ENCODE measurements at regions of chr11 and their contacts with region 1.

Region 1: GRCh38 chr11:92070026-92070889 is 154.4 kb upstream of the FAT3 start:
- DNase-seq: no peak
- ATAC-seq: no peak
- H3K4me3 ChIP-seq: no peak overlapping the region
- H3K4me3 Mint-ChIP-seq: no peak overlapping the region
- H3K27ac ChIP-seq: no peak overlapping the region
- H3K27ac Mint-ChIP-seq: no peak overlapping the region
- H3K4me1 ChIP-seq: no peaks in the 10 kb centered on the region
- H3K4me1 Mint-ChIP-seq: no peaks in the 10 kb centered on the region
- H3K27me3 ChIP-seq: no peaks in the 10 kb centered on the region
- H3K27me3 Mint-ChIP-seq: no peaks in the 10 kb centered on the region
- CTCF ChIP-seq: no peak

Region 2: DNA sequence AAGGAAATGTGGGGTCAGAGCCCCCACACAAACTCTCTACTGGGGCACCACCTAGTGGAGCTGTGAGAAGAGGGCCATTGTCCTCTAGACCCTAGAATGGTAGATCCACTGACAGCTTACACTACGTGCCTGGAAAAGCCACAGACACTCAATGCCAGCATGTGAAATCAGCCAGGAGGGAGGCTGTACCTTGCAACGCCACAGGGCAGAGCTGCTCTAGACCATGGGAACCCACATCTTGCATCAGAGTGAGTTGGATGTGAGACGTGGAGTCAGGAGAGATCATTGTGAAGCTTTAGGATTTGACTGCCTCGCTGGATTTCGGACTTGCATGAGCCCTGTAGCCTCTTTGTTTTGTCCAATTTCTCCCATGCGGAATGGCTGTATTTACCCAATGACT is 1394.3 kb before region 1 on chr11:
- CTCF ChIA-PET with region 1: no interaction called
- POLR2A ChIA-PET with region 1: no interaction called
- intact Hi-C with region 1: loop called (anchors 10 kb)
- DNase-seq: no peak
- ATAC-seq: no peak
- H3K4me3 ChIP-seq: no peak overlapping the region
- H3K4me3 Mint-ChIP-seq: no peak overlapping the region
- H3K27ac ChIP-seq: no peak overlapping the region
- H3K27ac Mint-ChIP-seq: no peak overlapping the region
- H3K4me1 ChIP-seq: no peaks in the 10 kb centered on the region
- H3K4me1 Mint-ChIP-seq: no peaks in the 10 kb centered on the region
- H3K27me3 ChIP-seq: no peaks in the 10 kb centered on the region
- H3K27me3 Mint-ChIP-seq: no peaks in the 10 kb centered on the region
- CTCF ChIP-seq: no peak